ENCODE measurements at regions of chr10 and their contacts with region 1.

Region 1: DNA sequence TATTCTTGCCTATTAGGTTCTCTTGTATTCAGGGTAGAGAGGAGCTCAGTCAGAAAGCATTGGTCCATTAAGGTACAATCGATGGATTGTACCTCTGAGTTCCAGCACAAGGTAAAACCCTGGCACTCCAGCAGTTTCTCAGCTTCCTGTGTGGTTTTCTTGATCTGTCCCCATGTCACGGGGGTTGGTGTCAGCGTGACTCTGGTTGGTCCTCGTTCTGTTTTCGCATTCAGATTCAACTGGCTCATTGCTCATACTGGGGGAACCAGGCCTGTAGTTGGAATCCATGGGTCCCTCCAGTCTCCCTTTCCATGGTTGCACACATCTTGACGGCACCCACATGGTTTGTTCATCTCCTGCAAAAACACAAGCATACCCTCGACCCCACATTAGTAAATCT is 32.7 kb upstream of the RASGEF1A start:
- DNase-seq: peak; percentile 77
- ATAC-seq: peak; percentile 91
- H3K4me3 Mint-ChIP-seq: no peak overlapping the region
- H3K27ac Mint-ChIP-seq: peak overlapping the region; percentile 88
- H3K4me1 Mint-ChIP-seq: peaks cover 33% of the 10 kb centered on the region
- H3K27me3 Mint-ChIP-seq: no peaks in the 10 kb centered on the region

Region 2: GRCh38 chr10:43333653-43334052 is 34.1 kb after region 1 on chr10:
- CTCF ChIA-PET with region 1: interaction called, 4 read pairs
- POLR2A ChIA-PET with region 1: no interaction called
- intact Hi-C with region 1: loop called in 1 of 2 experiments (anchors 5 kb)
- DNase-seq: no peak
- ATAC-seq: no peak
- H3K4me3 Mint-ChIP-seq: no peak overlapping the region
- H3K27ac Mint-ChIP-seq: no peak overlapping the region
- H3K4me1 Mint-ChIP-seq: peaks cover 26% of the 10 kb centered on the region
- H3K27me3 Mint-ChIP-seq: no peaks in the 10 kb centered on the region

Region 3: GRCh38 chr10:43627942-43628341 is 328.4 kb after region 1 on chr10:
- CTCF ChIA-PET with region 1: no interaction called
- POLR2A ChIA-PET with region 1: no interaction called
- intact Hi-C with region 1: no loop called
- DNase-seq: no peak
- ATAC-seq: no peak
- H3K4me3 Mint-ChIP-seq: no peak overlapping the region
- H3K27ac Mint-ChIP-seq: no peak overlapping the region
- H3K4me1 Mint-ChIP-seq: peaks cover 6% of the 10 kb centered on the region
- H3K27me3 Mint-ChIP-seq: no peaks in the 10 kb centered on the region

Measured in activated CD4-positive, alpha-beta T cell treated with anti-CD3 and anti-CD28 coated beads for 36 hours (primary cell).